Esophagus muscularis mucosa (tissue), 4 donors: ENCODE measurements at regions of chr12 and their contacts with region 1.

Region 1: GRCh38 chr12:59595883-59596540 is at the start of gene SLC16A7:
- DNase-seq: peak; percentile 97
- H3K4me3 ChIP-seq: peak within 1 kb of the TSS; percentile 62 to 90 (median 74)
- H3K27ac ChIP-seq: peak within 1 kb of the TSS; percentile 97 to 99 (median 99)
- H3K4me1 ChIP-seq: peaks cover 27 to 39% (median 34%) of the 10 kb centered on the region in 4 donors
- H3K27me3 ChIP-seq: no peaks in the 10 kb centered on the region
- CTCF ChIP-seq: no peak
- EP300 ChIP-seq: peak; percentile 32
- POLR2A ChIP-seq: peak; percentile 32
- total RNA-seq, gene SLC16A7: 16.9 to 45.4 (median 27.1) TPM

Region 2: GRCh38 chr12:59699421-59700152 is 103.6 kb after region 1 on chr12:
- intact Hi-C with region 1: loop called (anchors 10 kb)
- DNase-seq: no peak
- H3K4me3 ChIP-seq: no peak overlapping the region
- H3K27ac ChIP-seq: no peak overlapping the region
- H3K4me1 ChIP-seq: peaks cover 8 to 12% (median 10%) of the 10 kb centered on the region in 4 donors
- H3K27me3 ChIP-seq: no peaks in the 10 kb centered on the region
- CTCF ChIP-seq: no peak
- EP300 ChIP-seq: no peak
- POLR2A ChIP-seq: no peak

Region 3: DNA sequence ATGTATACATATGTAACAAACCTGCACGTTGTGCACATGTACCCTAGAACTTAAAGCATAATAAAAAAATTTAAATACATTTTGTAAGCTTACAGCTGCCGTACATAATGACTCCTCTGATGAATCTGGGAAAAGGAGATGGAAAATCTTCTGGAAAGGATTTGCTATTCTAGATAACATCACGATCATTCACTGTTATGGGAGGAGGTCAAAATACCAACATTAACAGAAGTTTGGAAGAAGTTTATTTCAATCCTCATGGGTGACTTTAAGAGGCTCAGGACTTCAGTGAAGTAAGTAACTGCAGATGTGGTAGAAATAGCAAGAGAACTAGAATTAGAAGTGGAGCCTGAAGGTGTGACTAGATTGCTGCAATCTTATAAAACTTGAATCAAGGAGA is 172.0 kb after region 1 on chr12:
- intact Hi-C with region 1: no loop called
- DNase-seq: no peak
- H3K4me3 ChIP-seq: no peak overlapping the region
- H3K27ac ChIP-seq: no peak overlapping the region
- H3K4me1 ChIP-seq: no peaks in the 10 kb centered on the region
- H3K27me3 ChIP-seq: no peaks in the 10 kb centered on the region
- CTCF ChIP-seq: no peak
- EP300 ChIP-seq: no peak
- POLR2A ChIP-seq: no peak